Activated B cell treated with CpG ODN at 0.5 μM for 24 hours (primary cell): ENCODE measurements at regions of chr12 and their contacts with region 1.

Region 1: GRCh38 chr12:19451196-19451595 is 11.9 kb downstream of the AEBP2 start:
- DNase-seq: no peak
- ATAC-seq: no peak
- H3K4me3 Mint-ChIP-seq: no peak overlapping the region
- H3K27ac Mint-ChIP-seq: no peak overlapping the region
- H3K4me1 Mint-ChIP-seq: peaks cover 64% of the 10 kb centered on the region
- H3K27me3 Mint-ChIP-seq: no peaks in the 10 kb centered on the region
- CTCF ChIP-seq: no peak

Region 2: GRCh38 chr12:19439059-19440018 is 11.9 kb before region 1 on chr12 and contains the start of gene AEBP2:
- CTCF ChIA-PET with region 1: no interaction called
- POLR2A ChIA-PET with region 1: interaction called, 4 read pairs
- intact Hi-C with region 1: loop called (anchors 2 kb)
- DNase-seq: peak; percentile 84
- ATAC-seq: peak; percentile 91
- H3K4me3 Mint-ChIP-seq: peak within 1 kb of the TSS; percentile 99
- H3K27ac Mint-ChIP-seq: peak within 1 kb of the TSS; percentile 92
- H3K4me1 Mint-ChIP-seq: peaks cover 37% of the 10 kb centered on the region
- H3K27me3 Mint-ChIP-seq: no peaks in the 10 kb centered on the region
- CTCF ChIP-seq: no peak
- total RNA-seq, gene AEBP2: 44.8 and 51.0 TPM in 2 replicates

Region 3: GRCh38 chr12:19499030-19499429 is 47.8 kb after region 1 on chr12:
- CTCF ChIA-PET with region 1: no interaction called
- POLR2A ChIA-PET with region 1: no interaction called
- intact Hi-C with region 1: loop called (anchors 1 kb)
- DNase-seq: no peak
- ATAC-seq: no peak
- H3K4me3 Mint-ChIP-seq: no peak overlapping the region
- H3K27ac Mint-ChIP-seq: no peak overlapping the region
- H3K4me1 Mint-ChIP-seq: no peaks in the 10 kb centered on the region
- H3K27me3 Mint-ChIP-seq: no peaks in the 10 kb centered on the region
- CTCF ChIP-seq: no peak